OCI-LY7 (cell line): ENCODE measurements at regions of chr3 and their contacts with region 1.

Region 1: DNA sequence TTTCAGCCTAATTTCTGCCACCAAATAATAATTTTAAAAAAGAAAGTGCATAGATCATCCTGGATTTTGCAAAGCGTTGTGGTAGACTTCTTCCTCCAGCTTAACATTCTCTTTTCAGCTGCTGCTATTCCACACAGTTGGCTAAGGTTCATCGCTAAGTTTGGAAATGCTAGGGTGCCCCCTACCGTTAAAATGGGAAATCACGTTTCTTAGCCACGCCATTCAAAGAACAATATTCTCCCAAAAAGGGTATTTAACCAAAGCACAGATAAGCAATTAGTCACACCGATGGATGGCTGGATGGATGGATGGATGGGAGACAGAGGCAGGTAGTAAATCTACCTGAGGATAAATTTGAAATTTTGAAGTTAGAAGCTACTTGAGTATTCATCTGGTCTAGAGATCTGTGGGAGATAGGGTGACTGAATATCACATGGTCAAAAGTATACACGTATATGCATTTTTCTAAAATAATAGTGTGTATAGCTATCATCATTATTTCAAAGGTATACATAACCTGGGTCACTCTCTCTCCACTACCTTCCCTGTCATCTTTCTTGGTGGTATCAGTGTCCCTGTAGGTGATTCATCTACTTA is 67.2 kb downstream of the EFHB start:
- DNase-seq: peak; percentile 63
- H3K4me3 ChIP-seq: no peak overlapping the region
- H3K27ac ChIP-seq: no peak overlapping the region
- H3K4me1 ChIP-seq: no peaks in the 10 kb centered on the region
- CTCF ChIP-seq: peak; percentile 94

Region 2: DNA sequence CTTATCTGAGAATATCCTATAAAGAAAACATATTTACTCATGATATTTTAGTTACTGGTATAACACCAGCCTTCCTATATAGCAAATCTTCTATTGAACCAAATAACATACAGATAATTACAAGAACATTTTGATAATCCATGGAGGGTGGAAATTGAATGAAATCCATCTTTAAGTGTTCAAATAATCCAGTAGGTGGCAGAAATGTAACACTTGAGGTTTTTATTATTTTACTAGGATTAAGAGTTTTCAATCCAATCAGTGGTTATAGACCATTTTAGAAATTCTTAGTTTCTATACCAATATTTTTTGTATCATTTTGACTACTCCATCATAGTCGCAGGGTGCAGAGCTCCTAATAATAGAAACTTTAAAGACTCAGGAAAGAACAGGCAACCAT is 820.4 kb before region 1 on chr3:
- CTCF ChIA-PET with region 1: no interaction called
- POLR2A ChIA-PET with region 1: interaction called, 3 read pairs
- intact Hi-C with region 1: loop called (anchors 5 kb)
- DNase-seq: peak; percentile 18
- H3K4me3 ChIP-seq: no peak overlapping the region
- H3K27ac ChIP-seq: no peak overlapping the region
- H3K4me1 ChIP-seq: no peaks in the 10 kb centered on the region
- CTCF ChIP-seq: peak; percentile 75

Region 3: GRCh38 chr3:19065027-19065426 is 801.8 kb before region 1 on chr3:
- CTCF ChIA-PET with region 1: no interaction called
- POLR2A ChIA-PET with region 1: no interaction called
- intact Hi-C with region 1: loop called (anchors 1 kb)
- DNase-seq: peak; percentile 36
- H3K4me3 ChIP-seq: no peak overlapping the region
- H3K27ac ChIP-seq: no peak overlapping the region
- H3K4me1 ChIP-seq: no peaks in the 10 kb centered on the region
- CTCF ChIP-seq: peak; percentile 83

Region 4: DNA sequence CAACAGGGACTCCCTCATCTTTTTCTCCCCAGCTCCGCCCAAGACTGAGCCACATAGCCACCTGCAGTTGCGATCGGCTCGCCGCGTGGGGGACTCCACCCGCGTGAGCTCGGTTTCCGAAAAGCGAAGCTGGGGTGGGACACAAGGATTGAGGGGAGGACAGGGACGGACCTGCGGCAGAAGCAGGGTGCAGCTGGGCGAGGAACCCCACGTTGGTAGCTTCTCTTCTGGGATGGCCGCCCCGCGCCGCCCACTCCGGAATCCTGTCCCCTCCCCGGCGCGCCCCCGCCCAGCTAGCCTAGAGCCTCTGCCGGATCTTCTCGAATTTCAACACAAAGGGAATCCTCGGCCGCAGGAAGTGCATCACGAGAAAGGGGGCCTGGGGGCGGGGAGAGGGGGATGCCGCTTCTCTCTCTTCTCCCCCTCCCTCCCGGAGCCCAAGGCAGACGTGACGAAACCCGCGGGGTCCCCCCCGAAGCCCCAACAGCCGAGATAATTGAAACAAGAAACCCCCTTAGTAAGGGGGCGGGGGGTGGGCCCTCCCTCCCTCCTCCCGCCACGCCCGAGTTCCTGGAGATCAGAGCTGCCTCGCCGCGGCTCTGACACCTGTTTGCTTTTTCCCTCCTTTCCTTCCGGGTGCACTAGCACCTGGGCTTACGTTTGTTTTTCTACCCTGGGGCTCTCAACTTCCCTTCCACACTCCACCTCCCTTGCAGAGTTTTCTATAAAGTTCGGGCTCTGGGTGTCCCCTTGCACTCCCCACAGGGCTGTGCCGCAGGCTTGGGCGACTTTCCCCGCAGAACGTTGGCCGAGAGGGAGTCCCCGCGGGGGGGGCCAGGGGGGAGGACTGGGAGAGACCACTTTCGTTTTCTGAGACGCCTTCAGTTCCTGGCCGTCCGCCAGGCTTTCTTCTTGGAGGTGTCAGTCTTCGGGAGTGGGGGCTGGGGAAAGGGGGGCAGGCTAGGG is 719.9 kb before region 1 on chr3:
- CTCF ChIA-PET with region 1: no interaction called
- POLR2A ChIA-PET with region 1: no interaction called
- intact Hi-C with region 1: loop called (anchors 5 kb)
- DNase-seq: peak; percentile 91
- H3K4me3 ChIP-seq: peak overlapping the region; percentile 72
- H3K27ac ChIP-seq: peak overlapping the region; percentile 68
- H3K4me1 ChIP-seq: peaks cover 11% of the 10 kb centered on the region
- CTCF ChIP-seq: peak; percentile 76

Region 5: GRCh38 chr3:19229086-19229485 is 637.8 kb before region 1 on chr3:
- CTCF ChIA-PET with region 1: no interaction called
- POLR2A ChIA-PET with region 1: no interaction called
- intact Hi-C with region 1: loop called (anchors 5 kb)
- DNase-seq: peak; percentile 16
- H3K4me3 ChIP-seq: no peak overlapping the region
- H3K27ac ChIP-seq: no peak overlapping the region
- H3K4me1 ChIP-seq: peaks cover 10% of the 10 kb centered on the region
- CTCF ChIP-seq: peak; percentile 62